ENCODE measurements at regions of chr10 and their contacts with region 1.

Region 1: DNA sequence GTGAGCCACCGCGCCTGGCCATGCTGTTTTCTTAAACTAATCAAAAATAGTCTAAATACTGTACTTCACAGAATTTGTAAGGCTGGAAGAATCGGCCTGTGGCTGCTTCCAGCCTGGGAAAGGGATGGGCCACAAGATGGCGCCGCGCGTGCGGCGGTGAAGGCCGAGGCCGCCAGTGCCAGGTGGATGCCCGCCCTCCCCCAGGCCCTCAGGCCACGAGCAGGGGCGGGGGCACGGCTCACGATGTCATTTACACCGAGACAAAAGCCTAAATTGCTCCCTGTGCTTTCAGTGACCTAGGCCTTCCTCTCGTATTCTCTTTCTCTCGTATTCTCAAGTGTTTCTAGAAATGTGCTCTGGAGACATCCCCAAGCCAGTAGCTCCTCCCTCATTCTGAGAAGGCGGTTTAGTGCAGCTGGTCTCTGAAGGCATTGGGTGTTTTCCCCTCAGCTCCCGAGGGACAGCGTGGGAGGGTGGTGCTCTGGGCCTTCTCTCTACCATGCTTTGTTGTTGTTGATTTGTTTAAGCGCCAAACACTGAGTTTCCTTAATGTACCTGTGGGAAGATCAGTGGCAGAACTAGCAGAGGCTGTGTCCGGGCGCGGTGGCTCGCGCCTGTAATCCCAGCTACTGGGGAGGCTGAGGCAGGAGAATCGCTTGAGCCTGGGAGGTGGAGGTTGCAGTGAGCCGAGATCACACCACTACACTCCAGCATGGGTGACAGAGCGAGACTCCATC is 68.4 kb downstream of the CDC123 start:
- DNase-seq: no peak
- H3K4me3 ChIP-seq: peak overlapping the region; percentile 53
- CTCF ChIP-seq: peak; percentile 89

Region 2: GRCh38 chr10:12150154-12150553 is 114.2 kb before region 1 on chr10:
- CTCF ChIA-PET with region 1: no interaction called
- POLR2A ChIA-PET with region 1: no interaction called
- DNase-seq: no peak
- H3K4me3 ChIP-seq: no peak overlapping the region
- CTCF ChIP-seq: no peak

Region 3: DNA sequence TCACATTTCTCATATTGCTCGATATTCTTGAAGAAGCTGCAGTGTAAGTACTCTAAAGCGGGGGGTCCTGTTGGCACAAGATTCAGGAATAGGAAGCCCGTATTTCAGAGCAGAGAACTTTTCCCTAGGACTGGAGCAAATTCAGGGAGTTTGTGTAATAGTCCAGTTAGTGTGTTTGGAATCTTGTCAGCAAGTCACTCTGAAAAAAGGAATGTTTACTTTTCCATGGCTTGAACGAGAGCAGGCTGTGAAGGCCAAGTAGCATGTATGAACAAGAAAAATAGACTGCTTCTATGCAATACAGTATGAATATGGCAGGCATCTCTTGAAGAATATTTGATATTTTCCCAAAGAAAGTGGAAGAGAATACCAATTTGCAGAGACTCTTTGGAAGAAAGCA is 28.6 kb before region 1 on chr10:
- CTCF ChIA-PET with region 1: no interaction called
- POLR2A ChIA-PET with region 1: no interaction called
- DNase-seq: no peak
- H3K4me3 ChIP-seq: no peak overlapping the region
- CTCF ChIP-seq: no peak

Region 4: DNA sequence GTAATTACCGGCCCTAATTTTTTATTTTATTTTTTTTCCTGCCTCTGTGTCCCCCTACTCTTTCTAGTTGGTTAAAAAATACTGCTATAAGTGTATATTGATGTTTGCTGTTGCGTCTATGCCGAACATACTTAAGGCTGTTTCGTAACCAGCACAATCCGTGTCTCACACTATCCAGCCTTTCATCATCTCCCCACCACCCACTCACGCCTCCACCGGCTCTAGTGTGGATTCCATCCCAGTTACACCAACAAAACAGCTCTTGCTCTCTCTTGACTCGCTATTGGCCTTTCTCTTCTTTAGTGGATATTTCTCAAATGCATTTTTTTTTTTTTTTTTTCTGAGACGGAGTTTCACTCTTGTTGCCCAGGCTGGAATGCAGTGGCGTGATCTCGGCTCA is 14.9 kb after region 1 on chr10:
- CTCF ChIA-PET with region 1: no interaction called
- POLR2A ChIA-PET with region 1: no interaction called
- DNase-seq: no peak
- H3K4me3 ChIP-seq: no peak overlapping the region
- CTCF ChIP-seq: no peak

Region 5: DNA sequence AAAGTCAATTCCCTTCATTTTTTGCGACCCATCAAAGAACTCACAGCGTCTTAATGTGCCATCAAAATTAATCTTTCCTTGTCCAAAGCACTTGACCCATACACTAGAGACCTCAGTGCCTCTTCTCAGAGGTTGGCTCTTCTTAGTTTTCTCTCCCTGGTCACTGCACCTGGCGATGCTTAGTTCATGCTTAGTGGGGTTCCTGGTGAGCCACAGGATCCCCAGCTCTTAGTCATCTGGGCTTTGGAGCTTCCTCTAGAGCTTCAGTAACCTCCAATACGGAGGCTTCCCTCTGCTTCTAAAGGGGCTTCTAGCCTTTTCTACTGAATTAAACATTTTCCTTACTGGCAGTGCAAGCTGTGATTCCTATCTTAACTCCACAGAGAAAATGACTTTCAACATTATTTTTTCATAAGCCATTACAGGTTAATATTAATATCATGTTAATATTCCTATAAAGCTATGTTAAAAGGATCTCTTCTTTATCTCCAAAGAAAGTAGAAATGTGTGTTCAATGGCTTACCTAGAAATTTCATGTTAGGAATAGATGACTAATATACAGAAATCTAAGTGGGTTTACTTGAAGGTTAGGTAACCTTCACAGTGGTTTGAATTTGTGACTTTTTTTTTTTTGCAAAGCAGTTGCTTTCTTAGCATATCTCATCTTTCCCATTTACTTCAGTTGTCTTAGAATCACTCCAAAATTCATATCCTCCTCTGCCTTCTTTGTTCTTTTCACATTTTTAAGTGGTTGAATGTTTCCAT is 380.2 kb after region 1 on chr10:
- CTCF ChIA-PET with region 1: interaction called, 11 read pairs
- POLR2A ChIA-PET with region 1: no interaction called
- DNase-seq: no peak
- H3K4me3 ChIP-seq: no peak overlapping the region
- CTCF ChIP-seq: no peak

Measured in AG04449 (cell line).